AG04450 (cell line): ENCODE measurements at regions of chr12 and their contacts with region 1.

Region 1: GRCh38 chr12:39619660-39620433 is at the start of gene ABCD2:
- DNase-seq: peak; percentile 16
- H3K4me3 ChIP-seq: peak within 1 kb of the TSS; percentile 60
- H3K27ac ChIP-seq: no peak within 1 kb of the TSS
- H3K27me3 ChIP-seq: no peaks in the 10 kb centered on the region
- CTCF ChIP-seq: no peak
- polyA plus RNA-seq, gene ABCD2: not detected in 2 replicates

Region 2: GRCh38 chr12:39319187-39319586 is 300.7 kb before region 1 on chr12:
- CTCF ChIA-PET with region 1: interaction called, 10 read pairs
- POLR2A ChIA-PET with region 1: no interaction called
- DNase-seq: no peak
- H3K4me3 ChIP-seq: no peak overlapping the region
- H3K27ac ChIP-seq: no peak overlapping the region
- H3K27me3 ChIP-seq: no peaks in the 10 kb centered on the region
- CTCF ChIP-seq: no peak

Region 3: DNA sequence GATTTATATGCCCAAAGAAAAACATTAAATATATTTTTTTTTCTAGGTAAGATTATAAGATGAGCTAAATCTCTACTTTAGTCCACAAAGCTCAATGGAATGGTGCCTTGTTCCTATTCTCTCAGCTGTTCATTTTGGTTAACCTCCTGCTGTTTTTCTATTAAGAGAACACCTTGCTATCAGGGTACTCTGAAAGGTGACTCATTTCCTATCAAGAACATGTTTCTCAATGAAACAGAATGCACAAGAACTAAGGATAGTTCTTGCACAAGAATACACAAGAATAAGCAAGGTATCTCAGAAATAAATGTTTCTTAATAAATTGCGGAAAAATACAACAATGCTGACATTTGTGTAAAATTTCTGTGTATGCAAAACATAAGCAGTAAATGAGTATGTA is 14.3 kb before region 1 on chr12:
- CTCF ChIA-PET with region 1: no interaction called
- POLR2A ChIA-PET with region 1: no interaction called
- DNase-seq: no peak
- H3K4me3 ChIP-seq: no peak overlapping the region
- H3K27ac ChIP-seq: no peak overlapping the region
- H3K27me3 ChIP-seq: no peaks in the 10 kb centered on the region
- CTCF ChIP-seq: no peak